WTC11 (cell line): ENCODE measurements at regions of chr16 and their contacts with region 1.

Region 1: DNA sequence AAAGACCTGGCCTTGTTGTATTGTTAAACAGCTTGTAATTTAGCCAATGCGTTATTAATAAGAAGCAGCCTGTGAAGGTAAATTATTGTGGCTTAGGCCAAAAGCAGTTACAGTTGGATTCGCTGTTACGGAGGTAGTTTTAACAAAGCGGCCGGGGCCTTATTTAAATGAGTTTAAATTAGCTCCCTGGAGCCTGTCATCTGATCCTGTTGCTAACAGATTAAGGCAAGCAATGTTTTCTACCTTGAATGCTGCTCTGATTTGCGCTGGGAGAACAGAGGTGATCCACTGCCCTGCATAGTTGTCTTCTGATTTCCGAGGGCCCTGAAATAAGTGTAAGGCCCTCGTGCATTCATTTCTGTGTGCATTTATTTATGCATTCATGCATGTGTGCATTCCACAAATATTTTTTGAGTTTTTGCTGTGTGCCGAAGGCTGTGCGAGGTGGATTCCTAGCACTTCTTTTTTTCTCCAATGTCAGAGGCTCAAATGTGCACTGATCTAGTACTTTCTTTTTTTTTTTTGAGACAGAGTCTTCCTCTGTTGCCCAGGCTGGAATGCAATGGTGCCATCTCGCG is 10.8 kb downstream of the SEC14L5 start:
- DNase-seq: no peak
- ATAC-seq: peak; percentile 71
- H3K4me3 Mint-ChIP-seq: peak overlapping the region; percentile 43
- H3K27ac Mint-ChIP-seq: peak overlapping the region; percentile 94
- H3K4me1 Mint-ChIP-seq: peaks cover 31% of the 10 kb centered on the region
- H3K27me3 Mint-ChIP-seq: no peaks in the 10 kb centered on the region
- CTCF ChIP-seq: no peak

Region 2: DNA sequence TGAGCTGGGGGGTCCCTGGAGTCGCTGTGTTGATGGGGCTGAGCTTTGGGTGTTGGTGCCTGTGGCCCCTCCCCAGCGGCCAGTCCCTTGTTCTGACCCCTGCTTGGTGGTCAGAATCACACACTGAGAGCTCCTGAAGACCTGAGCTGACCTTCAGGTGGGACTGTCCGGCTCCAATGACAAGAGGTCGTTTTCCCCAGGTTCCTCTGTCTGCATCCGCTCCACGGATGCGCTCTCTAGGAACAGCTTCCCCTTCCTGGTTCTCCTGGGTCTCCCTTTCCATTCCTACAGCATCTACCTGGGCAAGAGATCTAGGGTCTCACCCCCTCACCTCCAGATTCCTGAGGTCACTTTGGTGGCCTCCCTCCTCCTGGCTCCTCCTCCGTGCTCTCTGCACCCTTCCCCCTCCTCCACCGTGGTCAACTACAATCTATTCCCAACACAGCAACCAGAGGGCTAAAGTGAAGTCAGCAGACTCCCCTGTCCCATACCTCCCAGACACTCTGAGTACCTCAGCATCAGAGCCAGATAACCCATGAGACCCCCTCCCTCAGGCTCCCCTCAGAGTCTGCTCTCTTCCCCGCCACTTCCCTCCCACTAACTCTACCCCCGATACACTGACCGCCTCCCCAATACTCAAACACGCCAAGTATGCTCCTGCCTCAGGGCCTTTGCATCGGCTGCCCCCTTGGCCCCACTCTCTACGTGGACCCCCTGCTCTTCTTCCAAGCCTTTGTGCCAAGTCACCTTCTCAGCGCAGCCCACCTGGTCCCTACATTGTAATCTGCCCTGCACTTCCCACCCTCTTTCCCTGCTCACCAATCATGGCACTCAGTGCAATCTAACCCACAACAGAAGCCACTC is 19.8 kb before region 1 on chr16:
- CTCF ChIA-PET with region 1: no interaction called
- POLR2A ChIA-PET with region 1: no interaction called
- DNase-seq: no peak
- ATAC-seq: no peak
- H3K4me3 Mint-ChIP-seq: no peak overlapping the region
- H3K27ac Mint-ChIP-seq: no peak overlapping the region; the same call in 1 of the 2 replicates
- H3K4me1 Mint-ChIP-seq: peaks cover 29% of the 10 kb centered on the region
- H3K27me3 Mint-ChIP-seq: no peaks in the 10 kb centered on the region
- CTCF ChIP-seq: no peak

Region 3: GRCh38 chr16:5025171-5025632 is 56.2 kb after region 1 on chr16:
- CTCF ChIA-PET with region 1: interaction called, 18 read pairs
- POLR2A ChIA-PET with region 1: interaction called, 3 read pairs
- DNase-seq: peak; percentile 85
- ATAC-seq: peak; percentile 93
- H3K4me3 Mint-ChIP-seq: no peak overlapping the region
- H3K27ac Mint-ChIP-seq: no peak overlapping the region
- H3K4me1 Mint-ChIP-seq: no peaks in the 10 kb centered on the region
- H3K27me3 Mint-ChIP-seq: no peaks in the 10 kb centered on the region
- CTCF ChIP-seq: peak; percentile 45; the same call in 1 of the 2 replicates